WTC11 (cell line): ENCODE measurements at regions of chr4 and their contacts with region 1.

Region 1: DNA sequence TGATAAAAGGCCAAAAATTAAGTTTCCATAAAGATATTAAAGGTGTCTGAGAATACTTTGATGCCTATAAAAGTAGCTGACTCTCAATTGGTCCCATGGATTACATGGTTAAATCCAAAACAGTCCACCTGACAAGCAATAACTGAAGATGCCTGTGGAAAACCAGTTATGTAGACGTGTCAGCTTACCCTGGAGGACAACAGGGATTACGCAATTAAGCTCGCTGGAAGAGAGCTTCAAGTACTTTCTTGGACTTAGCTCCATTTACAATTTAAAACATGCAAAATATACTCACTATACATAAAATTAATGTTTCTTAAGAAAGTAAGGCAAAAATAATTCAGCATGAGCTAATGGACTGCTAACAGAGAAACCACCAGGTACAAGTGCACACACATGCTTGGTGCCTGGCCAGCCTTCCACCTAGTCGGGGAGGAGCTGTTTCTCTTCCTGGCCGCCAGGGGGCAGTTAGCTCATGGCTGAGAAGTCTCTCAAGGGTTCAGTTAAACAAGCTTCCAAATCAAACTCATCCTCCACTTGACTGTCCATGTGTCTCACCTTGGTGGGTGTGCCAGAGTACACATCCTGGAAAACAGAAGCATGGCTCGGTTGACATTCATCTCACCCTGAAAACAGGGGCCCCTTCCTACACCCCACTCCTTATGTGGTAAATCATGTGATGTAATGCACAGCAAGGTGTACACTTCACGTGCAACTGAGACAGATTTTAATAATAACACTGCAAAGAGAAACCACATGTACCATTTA is 9.2 kb upstream of the FAM53A start:
- DNase-seq: peak; percentile 77
- ATAC-seq: peak; percentile 87
- H3K4me3 Mint-ChIP-seq: no peak overlapping the region
- H3K27ac Mint-ChIP-seq: peak overlapping the region; percentile 66; the same call in 1 of the 2 replicates
- H3K4me1 Mint-ChIP-seq: no peaks in the 10 kb centered on the region
- H3K27me3 Mint-ChIP-seq: no peaks in the 10 kb centered on the region
- CTCF ChIP-seq: peak; percentile 94

Region 2: GRCh38 chr4:1628892-1629698 is 64.2 kb before region 1 on chr4:
- CTCF ChIA-PET with region 1: interaction called, 10 read pairs
- POLR2A ChIA-PET with region 1: no interaction called
- DNase-seq: peak; percentile 87
- ATAC-seq: peak; percentile 93
- H3K4me3 Mint-ChIP-seq: no peak overlapping the region
- H3K27ac Mint-ChIP-seq: no peak overlapping the region
- H3K4me1 Mint-ChIP-seq: no peaks in the 10 kb centered on the region
- H3K27me3 Mint-ChIP-seq: no peaks in the 10 kb centered on the region
- CTCF ChIP-seq: peak; percentile 96

Region 3: GRCh38 chr4:1644891-1645657 is 48.2 kb before region 1 on chr4:
- CTCF ChIA-PET with region 1: interaction called, 14 read pairs
- POLR2A ChIA-PET with region 1: no interaction called
- DNase-seq: no peak
- ATAC-seq: peak; percentile 81
- H3K4me3 Mint-ChIP-seq: no peak overlapping the region
- H3K27ac Mint-ChIP-seq: no peak overlapping the region
- H3K4me1 Mint-ChIP-seq: 0 out of 2 replicates have a peak, but pooled peaks cover 6% of the 10 kb centered on the region
- H3K27me3 Mint-ChIP-seq: no peaks in the 10 kb centered on the region
- CTCF ChIP-seq: no peak

Region 4: GRCh38 chr4:1703867-1704266 is 10.6 kb after region 1 on chr4:
- CTCF ChIA-PET with region 1: interaction called, 21 read pairs
- POLR2A ChIA-PET with region 1: no interaction called
- DNase-seq: no peak
- ATAC-seq: no peak
- H3K4me3 Mint-ChIP-seq: no peak overlapping the region
- H3K27ac Mint-ChIP-seq: no peak overlapping the region
- H3K4me1 Mint-ChIP-seq: no peaks in the 10 kb centered on the region
- H3K27me3 Mint-ChIP-seq: no peaks in the 10 kb centered on the region
- CTCF ChIP-seq: no peak

Region 5: DNA sequence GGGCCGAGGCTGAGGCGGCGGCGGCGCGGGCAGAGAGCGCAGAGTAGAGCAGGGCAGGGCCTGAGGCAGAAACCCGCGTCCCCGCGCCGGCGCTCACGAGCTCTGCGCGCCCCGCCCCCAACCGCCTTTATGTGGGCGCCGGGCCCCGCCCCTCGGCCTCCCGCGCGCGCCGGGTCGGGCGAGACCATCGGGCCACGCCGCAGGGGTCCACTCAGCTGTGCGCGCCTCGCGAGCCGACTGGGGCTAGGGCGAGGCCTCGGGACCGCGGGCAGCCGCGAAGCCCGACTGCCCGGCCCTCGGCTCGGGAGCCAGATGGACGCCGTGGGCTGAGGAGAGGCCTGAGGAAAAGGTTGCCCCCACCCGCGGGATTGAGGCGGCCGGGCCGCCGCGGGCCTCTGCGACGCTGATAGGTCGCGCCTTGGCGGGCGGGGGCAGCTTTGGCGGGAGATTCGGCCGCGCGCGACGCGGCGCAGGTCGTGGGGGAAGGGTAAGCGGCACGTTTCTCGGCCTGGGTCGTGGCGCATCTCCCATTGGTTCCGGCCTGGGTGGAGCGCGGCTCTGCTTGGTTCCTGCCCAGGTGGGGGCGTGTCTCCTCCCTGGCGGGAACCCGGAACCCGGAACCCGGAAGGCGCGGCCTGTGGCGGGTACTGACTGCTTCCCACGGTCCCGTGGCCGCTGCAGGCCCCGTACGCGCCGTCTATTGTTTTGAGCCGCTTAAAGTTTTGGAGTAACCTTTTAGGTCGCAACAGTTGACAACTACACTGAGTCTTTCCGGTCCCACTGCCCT is 19.1 kb after region 1 on chr4 and contains the start of gene SLBP:
- CTCF ChIA-PET with region 1: interaction called, 24 read pairs
- POLR2A ChIA-PET with region 1: interaction called, 4 read pairs
- DNase-seq: peak; percentile 92
- ATAC-seq: peak; percentile 80
- H3K4me3 Mint-ChIP-seq: peak within 1 kb of the TSS; percentile 95
- H3K27ac Mint-ChIP-seq: peak within 1 kb of the TSS; percentile 99
- H3K4me1 Mint-ChIP-seq: peaks cover 27% of the 10 kb centered on the region
- H3K27me3 Mint-ChIP-seq: peaks cover 2% of the 10 kb centered on the region; the same call in 1 of the 2 replicates
- CTCF ChIP-seq: no peak
- total RNA-seq, gene SLBP: 36.4 to 40.2 TPM (median 36.9 TPM) in 3 replicates

Region 6: GRCh38 chr4:1721004-1721665 is 27.8 kb after region 1 on chr4 and contains the starts of genes TACC3 and TMEM129:
- CTCF ChIA-PET with region 1: interaction called, 30 read pairs
- POLR2A ChIA-PET with region 1: interaction called, 4 read pairs
- DNase-seq: peak; percentile 97
- ATAC-seq: peak; percentile 90
- H3K4me3 Mint-ChIP-seq: peak within 1 kb of the TSS; percentile 96
- H3K27ac Mint-ChIP-seq: peak within 1 kb of the TSS; percentile 96
- H3K4me1 Mint-ChIP-seq: peaks cover 23% of the 10 kb centered on the region
- H3K27me3 Mint-ChIP-seq: no peaks in the 10 kb centered on the region
- CTCF ChIP-seq: no peak
- total RNA-seq, gene TACC3: 161 to 207 TPM (median 165 TPM) in 3 replicates
- total RNA-seq, gene TMEM129: 44.2 to 54.9 TPM (median 48.7 TPM) in 3 replicates

Region 7: GRCh38 chr4:1726146-1726934 is 33.0 kb after region 1 on chr4:
- CTCF ChIA-PET with region 1: interaction called, 33 read pairs
- POLR2A ChIA-PET with region 1: interaction called, 4 read pairs
- DNase-seq: peak; percentile 95
- ATAC-seq: peak; percentile 53
- H3K4me3 Mint-ChIP-seq: no peak overlapping the region
- H3K27ac Mint-ChIP-seq: peak overlapping the region; percentile 94
- H3K4me1 Mint-ChIP-seq: peaks cover 21% of the 10 kb centered on the region
- H3K27me3 Mint-ChIP-seq: no peaks in the 10 kb centered on the region
- CTCF ChIP-seq: peak; percentile 98

Region 8: DNA sequence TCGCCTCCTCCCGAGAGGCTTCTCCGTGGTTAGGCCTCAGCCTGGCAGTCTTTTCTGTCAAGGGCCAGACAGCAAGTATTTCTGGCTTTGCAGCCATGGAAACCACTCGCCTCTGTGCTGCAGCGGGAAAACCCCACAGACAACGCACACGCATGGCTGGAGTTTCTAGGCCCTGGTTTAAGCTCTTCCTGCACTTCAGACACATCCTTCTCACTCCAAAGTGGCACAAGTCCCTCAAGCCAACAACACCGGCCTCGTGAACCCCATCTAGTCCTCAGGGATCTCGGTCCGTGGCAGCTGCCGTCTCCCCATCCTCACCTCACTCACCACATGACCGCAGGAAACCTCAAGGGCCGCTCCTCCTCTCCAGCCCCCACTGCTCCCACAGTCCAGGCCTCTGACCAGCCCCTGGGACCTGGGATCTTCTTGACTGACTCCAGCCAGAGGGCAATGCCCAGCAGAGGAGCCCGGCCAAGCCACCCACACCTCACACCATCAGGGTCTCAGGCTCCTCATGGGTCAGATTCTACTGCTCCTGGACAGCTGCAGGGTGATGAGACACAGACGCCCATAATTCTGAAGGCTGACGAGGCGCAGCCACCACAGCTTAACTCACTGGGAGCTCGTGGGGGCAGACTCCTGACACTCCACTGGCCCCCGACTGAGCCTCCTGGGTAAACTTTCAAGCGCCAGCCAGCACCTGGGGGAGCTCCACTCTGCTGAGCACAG is 140.9 kb after region 1 on chr4:
- CTCF ChIA-PET with region 1: no interaction called
- POLR2A ChIA-PET with region 1: no interaction called
- DNase-seq: no peak
- ATAC-seq: no peak
- H3K4me3 Mint-ChIP-seq: no peak overlapping the region
- H3K27ac Mint-ChIP-seq: peak overlapping the region; percentile 51; the same call in 1 of the 2 replicates
- H3K4me1 Mint-ChIP-seq: peaks cover 10% of the 10 kb centered on the region
- H3K27me3 Mint-ChIP-seq: peaks cover 3% of the 10 kb centered on the region
- CTCF ChIP-seq: no peak

Region 9: DNA sequence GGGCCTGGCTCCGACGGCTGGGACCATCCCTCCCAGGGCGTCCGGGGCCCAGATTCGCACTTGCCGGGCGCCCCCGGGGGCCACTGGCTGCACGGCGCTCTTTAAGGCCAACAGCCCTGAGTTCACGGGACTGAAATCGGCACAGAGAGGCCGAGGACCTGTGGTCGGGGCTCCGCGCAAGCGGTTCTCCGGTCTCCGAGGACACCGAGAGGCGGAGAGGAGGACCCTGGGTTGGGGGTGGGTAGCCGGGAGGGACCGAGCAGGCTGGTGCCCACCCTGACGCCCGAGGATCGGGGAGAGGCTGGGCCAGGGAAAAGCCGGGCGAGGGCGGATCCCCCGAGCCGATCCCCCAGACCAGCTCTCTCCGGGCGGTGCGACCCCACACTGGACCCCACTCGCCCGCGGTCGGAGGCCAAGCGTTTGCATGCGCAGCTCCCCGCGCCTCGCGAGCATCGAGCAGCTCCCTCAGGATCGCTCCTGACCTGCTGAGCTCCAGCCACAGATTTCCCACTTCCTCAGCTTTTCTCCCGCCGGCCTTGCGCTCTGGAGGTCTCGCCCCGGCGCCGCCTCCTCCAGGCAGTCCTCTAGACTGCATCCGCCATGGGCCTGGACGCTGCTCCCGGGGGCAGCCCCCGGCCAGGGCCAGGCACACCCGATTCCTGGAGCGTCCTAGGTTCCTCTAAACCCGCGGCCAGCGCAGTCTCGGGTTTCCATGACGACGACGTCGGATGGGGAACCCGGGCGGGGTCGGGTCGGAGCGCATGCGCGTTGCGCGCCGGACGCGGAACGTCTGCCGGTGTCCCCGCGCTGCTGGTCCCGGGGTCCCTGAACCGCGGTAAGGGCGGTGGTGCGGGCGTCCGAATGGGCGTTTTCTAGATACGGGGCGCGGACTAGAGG is 348.2 kb after region 1 on chr4:
- CTCF ChIA-PET with region 1: no interaction called
- POLR2A ChIA-PET with region 1: no interaction called
- DNase-seq: peak; percentile 95
- ATAC-seq: peak; percentile 84
- H3K4me3 Mint-ChIP-seq: peak overlapping the region; percentile 75
- H3K27ac Mint-ChIP-seq: no peak overlapping the region
- H3K4me1 Mint-ChIP-seq: no peaks in the 10 kb centered on the region
- H3K27me3 Mint-ChIP-seq: peaks cover 69% of the 10 kb centered on the region
- CTCF ChIP-seq: no peak